Caco-2 (cell line): ENCODE measurements at regions of chr12 and their contacts with region 1.

Region 1: DNA sequence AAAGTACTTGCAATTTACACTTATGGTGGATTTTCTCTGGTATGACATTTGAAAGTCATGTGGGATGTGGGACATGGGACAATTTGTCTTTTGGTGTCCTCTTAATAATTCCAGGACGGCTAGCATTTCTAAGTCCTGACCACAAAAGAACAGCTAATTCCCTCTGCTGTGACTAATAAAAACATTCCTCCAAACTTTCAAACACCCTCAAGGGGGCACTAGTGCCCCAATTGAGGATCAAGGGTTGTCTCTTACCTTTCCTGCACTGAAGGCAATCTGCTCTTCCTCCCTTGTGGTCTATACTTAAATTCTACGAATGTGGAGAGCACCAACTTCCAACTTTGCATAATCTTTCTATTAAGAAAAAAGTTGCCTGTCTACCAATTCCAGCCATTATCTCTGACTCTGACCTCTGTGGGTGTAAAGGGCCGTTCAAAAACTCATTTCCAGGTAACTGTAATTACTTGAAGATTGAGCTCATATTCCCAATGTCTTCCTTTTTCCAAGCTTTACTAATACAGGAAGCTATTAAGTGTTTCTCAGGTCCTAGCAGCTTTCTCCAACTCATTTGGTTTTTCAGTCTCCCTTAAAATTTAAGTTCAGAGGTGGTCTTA is 210.2 kb downstream of the PTPRO start:
- DNase-seq: peak; percentile 48 to 69
- H3K4me3 ChIP-seq: no peak overlapping the region
- H3K4me3 Mint-ChIP-seq: no peak overlapping the region
- H3K27ac Mint-ChIP-seq: no peak overlapping the region
- H3K4me1 ChIP-seq: no peaks in the 10 kb centered on the region
- H3K4me1 Mint-ChIP-seq: no peaks in the 10 kb centered on the region
- H3K27me3 ChIP-seq: 0 out of 2 replicates have a peak, but pooled peaks cover 1% of the 10 kb centered on the region
- H3K27me3 Mint-ChIP-seq: peaks cover 5% of the 10 kb centered on the region
- CTCF ChIP-seq: peak; percentile 50 to 74

Region 2: GRCh38 chr12:15584366-15585041 is 52.0 kb after region 1 on chr12:
- CTCF ChIA-PET with region 1: interaction called, 23 read pairs
- POLR2A ChIA-PET with region 1: no interaction called
- intact Hi-C with region 1: loop called (anchors 1 kb)
- DNase-seq: peak in 1 of 2 experiments; percentile 20
- H3K4me3 ChIP-seq: no peak overlapping the region
- H3K4me3 Mint-ChIP-seq: no peak overlapping the region
- H3K27ac Mint-ChIP-seq: no peak overlapping the region
- H3K4me1 ChIP-seq: no peaks in the 10 kb centered on the region
- H3K4me1 Mint-ChIP-seq: no peaks in the 10 kb centered on the region
- H3K27me3 ChIP-seq: no peaks in the 10 kb centered on the region; the same call in 1 of the 2 replicates
- H3K27me3 Mint-ChIP-seq: peaks cover 3% of the 10 kb centered on the region
- CTCF ChIP-seq: peak; percentile 48 to 49

Region 3: DNA sequence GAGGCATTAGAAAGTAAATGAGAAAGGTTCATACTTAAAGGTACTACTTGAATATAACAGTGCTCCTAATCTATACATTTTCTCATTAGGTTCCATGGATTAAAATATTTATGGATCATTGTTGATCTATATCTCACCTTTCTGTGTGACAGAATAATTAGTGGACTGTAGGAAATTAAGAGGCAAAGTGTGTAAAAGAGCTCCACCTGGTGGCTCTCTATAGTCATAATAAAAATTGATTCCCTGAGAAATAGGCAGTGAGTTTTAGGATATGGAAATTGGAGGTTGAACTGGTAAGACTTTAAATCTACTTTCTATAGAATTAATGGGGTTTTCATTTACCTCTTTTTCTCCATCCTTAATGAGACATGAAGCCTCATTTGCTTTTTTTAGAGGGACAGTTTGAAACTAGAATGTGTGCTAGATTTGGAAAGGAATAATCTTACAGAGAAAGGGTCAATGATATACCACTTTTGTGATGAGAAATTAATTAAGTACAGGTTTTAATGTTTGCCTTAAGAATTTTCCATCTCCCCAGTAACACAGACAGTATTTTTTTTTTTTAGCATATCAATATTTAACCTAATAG is 366.9 kb after region 1 on chr12:
- CTCF ChIA-PET with region 1: no interaction called
- POLR2A ChIA-PET with region 1: no interaction called
- intact Hi-C with region 1: loop called (anchors 1 kb)
- DNase-seq: peak in 1 of 2 experiments; percentile 38
- H3K4me3 ChIP-seq: no peak overlapping the region
- H3K4me3 Mint-ChIP-seq: no peak overlapping the region
- H3K27ac Mint-ChIP-seq: no peak overlapping the region
- H3K4me1 ChIP-seq: no peaks in the 10 kb centered on the region
- H3K4me1 Mint-ChIP-seq: no peaks in the 10 kb centered on the region
- H3K27me3 ChIP-seq: no peaks in the 10 kb centered on the region
- H3K27me3 Mint-ChIP-seq: no peaks in the 10 kb centered on the region
- CTCF ChIP-seq: peak; percentile 70 to 88